B cell (primary cell): ENCODE measurements at regions of chr11 and their contacts with region 1.

Region 1: DNA sequence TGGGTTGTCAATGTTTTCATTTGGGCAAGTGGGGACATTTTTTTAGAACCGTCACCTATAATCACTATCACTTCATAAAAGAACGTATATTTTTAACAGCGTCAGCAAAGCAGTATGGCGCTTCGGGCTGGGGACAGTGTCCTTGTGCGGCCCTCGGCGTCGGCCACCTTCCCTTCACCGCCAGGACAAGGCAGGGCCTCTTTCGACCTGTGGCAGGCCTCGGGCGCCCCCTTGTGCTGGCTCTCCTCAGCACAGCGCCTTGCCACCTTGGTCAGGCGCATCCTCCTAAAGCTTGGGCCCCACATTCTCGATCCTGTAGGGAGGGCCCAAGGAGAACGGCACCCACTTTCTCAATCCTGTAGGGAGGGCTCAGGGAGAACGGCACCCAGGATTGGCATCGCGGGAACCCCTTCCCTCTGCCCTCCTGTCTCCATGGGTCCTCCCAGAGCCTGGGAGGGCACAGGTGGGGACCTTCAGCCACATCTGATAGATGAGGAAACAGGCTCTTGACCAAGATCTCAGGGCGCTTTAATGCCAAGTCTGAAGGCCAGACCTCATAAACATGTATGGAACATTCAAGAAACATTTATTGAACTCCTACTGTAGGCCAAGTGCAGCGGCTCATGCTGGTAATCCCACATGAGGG is 11.5 kb upstream of the FADD start:
- DNase-seq: peak; percentile 32
- ATAC-seq: no peak
- H3K4me3 ChIP-seq: no peak overlapping the region
- H3K4me3 Mint-ChIP-seq: no peak overlapping the region
- H3K27ac ChIP-seq: no peak overlapping the region
- H3K27ac Mint-ChIP-seq: no peak overlapping the region
- H3K4me1 ChIP-seq: no peaks in the 10 kb centered on the region
- H3K4me1 Mint-ChIP-seq: peaks cover 2% of the 10 kb centered on the region
- H3K27me3 ChIP-seq: peaks cover 0 to 16% (median 3%) of the 10 kb centered on the region in 4 experiments
- H3K27me3 Mint-ChIP-seq: peaks cover 9% of the 10 kb centered on the region
- CTCF ChIP-seq: peak; percentile 36

Region 2: GRCh38 chr11:69909561-69910496 is 281.8 kb before region 1 on chr11:
- CTCF ChIA-PET with region 1: interaction called, 9 read pairs
- POLR2A ChIA-PET with region 1: no interaction called
- intact Hi-C with region 1: loop called (anchors 2 kb)
- DNase-seq: peak; percentile 30
- ATAC-seq: no peak
- H3K4me3 ChIP-seq: no peak overlapping the region
- H3K4me3 Mint-ChIP-seq: no peak overlapping the region
- H3K27ac ChIP-seq: no peak overlapping the region
- H3K27ac Mint-ChIP-seq: no peak overlapping the region
- H3K4me1 ChIP-seq: no peaks in the 10 kb centered on the region
- H3K4me1 Mint-ChIP-seq: no peaks in the 10 kb centered on the region
- H3K27me3 ChIP-seq: peaks cover 0 to 19% (median 0%) of the 10 kb centered on the region in 4 experiments
- H3K27me3 Mint-ChIP-seq: peaks cover 26% of the 10 kb centered on the region
- CTCF ChIP-seq: peak; percentile 55

Region 3: GRCh38 chr11:69918938-69919650 is 272.5 kb before region 1 on chr11:
- CTCF ChIA-PET with region 1: interaction called, 10 read pairs
- POLR2A ChIA-PET with region 1: no interaction called
- intact Hi-C with region 1: no loop called
- DNase-seq: peak; percentile 66
- ATAC-seq: peak; percentile 49
- H3K4me3 ChIP-seq: no peak overlapping the region
- H3K4me3 Mint-ChIP-seq: no peak overlapping the region
- H3K27ac ChIP-seq: no peak overlapping the region
- H3K27ac Mint-ChIP-seq: no peak overlapping the region
- H3K4me1 ChIP-seq: peaks cover 0 to 5% of the 10 kb centered on the region in 2 donors
- H3K4me1 Mint-ChIP-seq: no peaks in the 10 kb centered on the region
- H3K27me3 ChIP-seq: peaks cover 0 to 32% (median 5%) of the 10 kb centered on the region in 4 experiments
- H3K27me3 Mint-ChIP-seq: peaks cover 34% of the 10 kb centered on the region
- CTCF ChIP-seq: peak; percentile 73

Region 4: GRCh38 chr11:70029115-70029830 is 162.3 kb before region 1 on chr11:
- CTCF ChIA-PET with region 1: no interaction called
- POLR2A ChIA-PET with region 1: no interaction called
- intact Hi-C with region 1: no loop called
- DNase-seq: no peak
- ATAC-seq: no peak
- H3K4me3 ChIP-seq: no peak overlapping the region
- H3K4me3 Mint-ChIP-seq: no peak overlapping the region
- H3K27ac ChIP-seq: no peak overlapping the region
- H3K27ac Mint-ChIP-seq: no peak overlapping the region
- H3K4me1 ChIP-seq: no peaks in the 10 kb centered on the region
- H3K4me1 Mint-ChIP-seq: no peaks in the 10 kb centered on the region
- H3K27me3 ChIP-seq: no peaks in the 10 kb centered on the region
- H3K27me3 Mint-ChIP-seq: peaks cover 16% of the 10 kb centered on the region
- CTCF ChIP-seq: no peak

Region 5: DNA sequence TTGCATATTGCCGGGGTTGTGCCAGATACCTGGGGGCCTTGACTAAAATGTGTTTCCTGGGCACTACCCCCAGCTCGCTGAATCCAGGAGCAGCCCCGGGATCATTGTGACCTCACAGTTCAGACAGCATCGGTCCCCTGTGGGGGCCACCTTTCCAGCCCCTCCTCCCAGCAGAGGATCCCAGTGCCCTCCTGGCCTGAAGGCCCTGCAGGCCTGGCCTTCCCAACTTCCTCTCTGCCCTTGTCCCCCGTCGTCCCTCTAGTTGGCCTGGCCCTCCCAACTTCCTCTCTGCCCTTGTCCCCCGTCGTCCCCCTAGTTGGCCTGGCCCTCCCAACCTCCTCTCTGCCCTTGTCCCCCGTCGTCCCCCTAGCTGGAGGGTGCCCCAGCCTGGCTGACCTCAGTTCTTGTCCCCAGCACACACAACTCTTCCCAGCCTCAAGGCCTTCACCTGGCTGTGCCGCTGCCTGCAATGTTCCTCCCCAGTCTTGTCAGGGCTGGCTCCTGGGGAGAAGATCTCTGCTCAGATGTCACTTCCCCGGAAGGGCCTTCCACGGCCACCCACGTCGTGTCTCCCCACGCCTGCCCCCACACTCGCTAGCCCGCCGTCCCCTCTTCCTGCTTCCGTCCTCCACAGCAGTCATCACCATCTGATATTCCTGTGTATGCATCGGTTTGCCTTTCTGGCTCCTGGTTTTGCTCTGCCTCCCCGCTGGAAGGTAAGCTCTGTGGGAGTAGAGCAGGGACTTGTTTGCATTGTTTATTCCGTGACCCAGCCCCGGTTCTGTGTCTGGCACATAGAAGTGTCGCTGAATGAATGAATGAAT is 126.1 kb before region 1 on chr11:
- CTCF ChIA-PET with region 1: no interaction called
- POLR2A ChIA-PET with region 1: no interaction called
- intact Hi-C with region 1: no loop called
- DNase-seq: no peak
- ATAC-seq: no peak
- H3K4me3 ChIP-seq: no peak overlapping the region
- H3K4me3 Mint-ChIP-seq: no peak overlapping the region
- H3K27ac ChIP-seq: no peak overlapping the region
- H3K27ac Mint-ChIP-seq: no peak overlapping the region
- H3K4me1 ChIP-seq: no peaks in the 10 kb centered on the region
- H3K4me1 Mint-ChIP-seq: no peaks in the 10 kb centered on the region
- H3K27me3 ChIP-seq: peaks cover 0 to 13% (median 5%) of the 10 kb centered on the region in 4 experiments
- H3K27me3 Mint-ChIP-seq: peaks cover 40% of the 10 kb centered on the region
- CTCF ChIP-seq: no peak

Region 6: GRCh38 chr11:70202898-70203748 is 11.5 kb after region 1 on chr11 and contains the start of gene FADD:
- CTCF ChIA-PET with region 1: interaction called, 14 read pairs
- POLR2A ChIA-PET with region 1: no interaction called
- intact Hi-C with region 1: no loop called
- DNase-seq: peak; percentile 95
- ATAC-seq: peak; percentile 78
- H3K4me3 ChIP-seq: peak within 1 kb of the TSS; percentile 80 to 98 (median 96)
- H3K4me3 Mint-ChIP-seq: peak within 1 kb of the TSS; percentile 93
- H3K27ac ChIP-seq: peak within 1 kb of the TSS; percentile 49 to 84
- H3K27ac Mint-ChIP-seq: peak within 1 kb of the TSS; percentile 94
- H3K4me1 ChIP-seq: peaks cover 18 to 26% of the 10 kb centered on the region in 2 donors
- H3K4me1 Mint-ChIP-seq: peaks cover 31% of the 10 kb centered on the region
- H3K27me3 ChIP-seq: no peaks in the 10 kb centered on the region
- H3K27me3 Mint-ChIP-seq: no peaks in the 10 kb centered on the region
- CTCF ChIP-seq: no peak
- total RNA-seq, gene FADD: 26.6 and 27.1 TPM in 2 replicates